PC-9 (cell line): ENCODE measurements at regions of chr1 and their contacts with region 1.

Region 1: GRCh38 chr1:75600781-75601180 is 10.1 kb downstream of the SLC44A5 start:
- DNase-seq: no peak
- H3K4me3 ChIP-seq: no peak overlapping the region
- H3K27ac ChIP-seq: no peak overlapping the region
- H3K4me1 ChIP-seq: no peaks in the 10 kb centered on the region
- H3K27me3 ChIP-seq: no peaks in the 10 kb centered on the region
- CTCF ChIP-seq: no peak

Region 2: GRCh38 chr1:75449998-75450397 is 150.8 kb before region 1 on chr1:
- CTCF ChIA-PET with region 1: no interaction called
- POLR2A ChIA-PET with region 1: no interaction called
- intact Hi-C with region 1: no loop called
- DNase-seq: no peak
- H3K4me3 ChIP-seq: no peak overlapping the region
- H3K27ac ChIP-seq: no peak overlapping the region
- H3K4me1 ChIP-seq: no peaks in the 10 kb centered on the region
- H3K27me3 ChIP-seq: no peaks in the 10 kb centered on the region
- CTCF ChIP-seq: no peak

Region 3: GRCh38 chr1:75514270-75514669 is 86.5 kb before region 1 on chr1:
- CTCF ChIA-PET with region 1: no interaction called
- POLR2A ChIA-PET with region 1: interaction called, 12 read pairs
- intact Hi-C with region 1: no loop called
- DNase-seq: no peak
- H3K4me3 ChIP-seq: no peak overlapping the region
- H3K27ac ChIP-seq: no peak overlapping the region
- H3K4me1 ChIP-seq: no peaks in the 10 kb centered on the region
- H3K27me3 ChIP-seq: no peaks in the 10 kb centered on the region
- CTCF ChIP-seq: no peak

Region 4: GRCh38 chr1:75855010-75855409 is 254.2 kb after region 1 on chr1:
- CTCF ChIA-PET with region 1: no interaction called
- POLR2A ChIA-PET with region 1: no interaction called
- intact Hi-C with region 1: no loop called
- DNase-seq: peak; percentile 11 to 68
- H3K4me3 ChIP-seq: no peak overlapping the region
- H3K27ac ChIP-seq: no peak overlapping the region
- H3K4me1 ChIP-seq: peaks cover 9% of the 10 kb centered on the region; the same call in 1 of the 2 replicates
- H3K27me3 ChIP-seq: peaks cover 17% of the 10 kb centered on the region
- CTCF ChIP-seq: no peak